CD4-positive, alpha-beta T cell (primary cell): ENCODE measurements at regions of chr11 and their contacts with region 1.

Region 1: DNA sequence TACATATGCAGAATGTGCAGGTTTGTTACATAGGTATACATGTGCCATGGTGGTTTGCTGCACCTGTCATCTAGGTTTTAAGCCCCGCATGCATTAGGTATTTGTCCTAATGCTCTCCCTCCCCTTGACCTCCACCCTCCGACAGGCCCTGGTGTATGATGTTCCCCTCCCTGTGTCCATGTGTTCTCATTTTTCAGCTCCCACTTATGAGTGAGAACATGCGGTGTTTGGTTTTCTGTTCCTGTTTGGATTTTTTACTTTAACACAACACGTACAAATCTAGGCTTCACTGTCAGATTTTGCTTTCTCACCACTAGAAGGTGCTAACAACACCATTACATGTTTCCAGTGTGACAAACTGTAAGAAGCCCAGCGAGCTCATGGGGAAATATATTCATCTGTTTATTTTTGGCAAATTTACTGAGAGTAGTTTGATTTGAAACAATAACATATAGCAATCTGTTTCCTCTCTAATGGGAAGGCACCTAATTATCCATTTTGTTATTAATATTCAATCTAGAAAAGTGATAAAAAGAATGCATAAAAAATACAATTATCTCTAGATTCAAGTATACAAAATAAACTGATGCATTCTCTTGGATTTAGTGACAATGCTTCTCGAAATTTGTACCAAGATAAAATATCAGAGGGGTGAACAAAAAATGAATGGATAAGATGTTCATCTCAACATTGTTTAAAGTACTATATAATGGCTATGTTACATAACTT is 23.2 kb upstream of the BIRC3 start:
- DNase-seq: peak in 5 of 14 experiments; percentile 8 to 85 (median 79)
- ATAC-seq: peak; percentile 99
- H3K4me3 ChIP-seq: peak overlapping the region; percentile 48
- H3K4me3 Mint-ChIP-seq: peak overlapping the region; percentile 82
- H3K27ac ChIP-seq: no peak overlapping the region
- H3K27ac Mint-ChIP-seq: peak overlapping the region; percentile 68
- H3K4me1 ChIP-seq: peaks cover 14% of the 10 kb centered on the region
- H3K4me1 Mint-ChIP-seq: peaks cover 36% of the 10 kb centered on the region
- H3K27me3 ChIP-seq: no peaks in the 10 kb centered on the region
- H3K27me3 Mint-ChIP-seq: no peaks in the 10 kb centered on the region
- CTCF ChIP-seq: peak; percentile 92

Region 2: GRCh38 chr11:102306048-102306585 is 12.1 kb after region 1 on chr11:
- CTCF ChIA-PET with region 1: interaction called, 185 read pairs
- POLR2A ChIA-PET with region 1: interaction called, 60 read pairs
- intact Hi-C with region 1: no loop called
- DNase-seq: peak in 10 of 14 experiments; percentile 34 to 66 (median 40)
- ATAC-seq: peak; percentile 72
- H3K4me3 ChIP-seq: no peak overlapping the region
- H3K4me3 Mint-ChIP-seq: peak overlapping the region; percentile 69
- H3K27ac ChIP-seq: peak overlapping the region; percentile 76 to 80
- H3K27ac Mint-ChIP-seq: peak overlapping the region; percentile 98
- H3K4me1 ChIP-seq: peaks cover 54% of the 10 kb centered on the region
- H3K4me1 Mint-ChIP-seq: peaks cover 68% of the 10 kb centered on the region
- H3K27me3 ChIP-seq: no peaks in the 10 kb centered on the region
- H3K27me3 Mint-ChIP-seq: no peaks in the 10 kb centered on the region
- CTCF ChIP-seq: no peak

Region 3: DNA sequence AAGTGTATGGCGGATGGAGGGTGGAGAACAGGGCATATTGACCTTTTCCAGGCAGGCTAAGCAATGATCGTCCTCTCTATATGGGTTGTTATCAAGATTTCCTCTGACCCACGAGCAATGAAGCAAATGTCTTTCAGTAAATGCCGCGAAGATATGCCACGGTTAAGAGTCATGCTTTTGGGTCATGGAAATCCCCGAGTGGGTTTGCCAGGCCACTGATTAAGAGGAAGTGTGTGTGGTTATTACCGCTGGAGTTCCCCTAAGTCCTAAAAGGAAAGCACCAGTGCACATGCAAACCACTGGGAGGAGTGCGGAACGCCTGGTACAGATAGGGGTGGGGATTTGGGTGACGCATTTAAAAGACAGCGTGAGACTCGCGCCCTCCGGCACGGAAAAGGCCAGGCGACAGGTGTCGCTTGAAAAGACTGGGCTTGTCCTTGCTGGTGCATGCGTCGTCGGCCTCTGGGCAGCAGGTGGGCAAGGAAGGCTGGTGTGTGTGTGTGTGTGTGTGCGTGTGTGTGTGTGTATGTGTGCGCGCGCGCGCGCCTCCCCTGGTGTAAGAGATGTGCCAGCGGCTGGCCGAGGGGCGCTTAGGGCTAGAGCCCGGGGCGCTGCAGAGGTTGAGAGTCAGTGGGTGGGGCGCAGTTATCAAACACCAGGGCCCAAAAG is 23.2 kb after region 1 on chr11 and contains the start of gene BIRC3:
- CTCF ChIA-PET with region 1: interaction called, 185 read pairs
- POLR2A ChIA-PET with region 1: interaction called, 156 read pairs
- intact Hi-C with region 1: loop called (anchors 1 kb)
- DNase-seq: peak; percentile 74 to 99 (median 88)
- ATAC-seq: peak; percentile 83
- H3K4me3 ChIP-seq: peak within 1 kb of the TSS; percentile 91
- H3K4me3 Mint-ChIP-seq: peak within 1 kb of the TSS; percentile 97
- H3K27ac ChIP-seq: peak within 1 kb of the TSS; percentile 95 to 96
- H3K27ac Mint-ChIP-seq: peak within 1 kb of the TSS; percentile 93
- H3K4me1 ChIP-seq: peaks cover 42% of the 10 kb centered on the region
- H3K4me1 Mint-ChIP-seq: peaks cover 75% of the 10 kb centered on the region
- H3K27me3 ChIP-seq: no peaks in the 10 kb centered on the region
- H3K27me3 Mint-ChIP-seq: no peaks in the 10 kb centered on the region
- CTCF ChIP-seq: peak; percentile 34
- total RNA-seq, gene BIRC3: 115 to 124 TPM

Region 4: DNA sequence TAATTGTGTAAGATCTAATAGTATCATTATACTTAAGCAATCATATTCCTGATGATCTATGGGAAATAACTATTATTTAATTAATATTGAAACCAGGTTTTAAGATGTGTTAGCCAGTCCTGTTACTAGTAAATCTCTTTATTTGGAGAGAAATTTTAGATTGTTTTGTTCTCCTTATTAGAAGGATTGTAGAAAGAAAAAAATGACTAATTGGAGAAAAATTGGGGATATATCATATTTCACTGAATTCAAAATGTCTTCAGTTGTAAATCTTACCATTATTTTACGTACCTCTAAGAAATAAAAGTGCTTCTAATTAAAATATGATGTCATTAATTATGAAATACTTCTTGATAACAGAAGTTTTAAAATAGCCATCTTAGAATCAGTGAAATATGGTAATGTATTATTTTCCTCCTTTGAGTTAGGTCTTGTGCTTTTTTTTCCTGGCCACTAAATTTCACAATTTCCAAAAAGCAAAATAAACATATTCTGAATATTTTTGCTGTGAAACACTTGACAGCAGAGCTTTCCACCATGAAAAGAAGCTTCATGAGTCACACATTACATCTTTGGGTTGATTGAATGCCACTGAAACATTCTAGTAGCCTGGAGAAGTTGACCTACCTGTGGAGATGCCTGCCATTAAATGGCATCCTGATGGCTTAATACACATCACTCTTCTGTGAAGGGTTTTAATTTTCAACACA is 29.7 kb after region 1 on chr11:
- CTCF ChIA-PET with region 1: interaction called, 185 read pairs
- POLR2A ChIA-PET with region 1: interaction called, 156 read pairs
- intact Hi-C with region 1: loop called in 1 of 2 experiments (anchors 1 kb)
- DNase-seq: no peak
- ATAC-seq: no peak
- H3K4me3 ChIP-seq: no peak overlapping the region
- H3K4me3 Mint-ChIP-seq: no peak overlapping the region
- H3K27ac ChIP-seq: peak overlapping the region in 1 of 2 donors; percentile 20
- H3K27ac Mint-ChIP-seq: peak overlapping the region; percentile 50
- H3K4me1 ChIP-seq: peaks cover 36% of the 10 kb centered on the region
- H3K4me1 Mint-ChIP-seq: peaks cover 62% of the 10 kb centered on the region
- H3K27me3 ChIP-seq: no peaks in the 10 kb centered on the region
- H3K27me3 Mint-ChIP-seq: no peaks in the 10 kb centered on the region
- CTCF ChIP-seq: no peak

Region 5: DNA sequence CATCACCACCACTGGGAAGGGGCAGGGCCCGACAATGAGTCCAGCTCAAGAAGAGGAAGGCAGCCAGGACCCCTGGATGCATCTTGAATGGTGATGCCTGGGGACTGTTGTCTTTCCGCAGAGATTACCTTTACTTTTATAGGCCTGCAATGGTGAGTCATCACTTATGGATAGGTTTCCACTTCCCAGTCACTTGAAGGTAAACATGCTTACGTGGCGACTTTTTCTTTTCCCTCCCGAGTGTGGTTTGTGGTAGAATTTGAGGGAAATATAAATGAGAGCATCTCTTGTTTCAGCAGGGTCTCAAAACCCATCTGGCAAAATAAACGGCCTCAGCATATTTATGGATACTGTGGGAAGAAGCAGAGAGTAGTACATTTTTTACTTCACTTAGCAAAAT is 661.6 kb after region 1 on chr11 and contains the start of gene MMP13:
- CTCF ChIA-PET with region 1: no interaction called
- POLR2A ChIA-PET with region 1: no interaction called
- intact Hi-C with region 1: no loop called
- DNase-seq: no peak
- ATAC-seq: no peak
- H3K4me3 ChIP-seq: no peak within 1 kb of the TSS
- H3K4me3 Mint-ChIP-seq: no peak within 1 kb of the TSS
- H3K27ac ChIP-seq: no peak within 1 kb of the TSS
- H3K27ac Mint-ChIP-seq: no peak within 1 kb of the TSS
- H3K4me1 ChIP-seq: no peaks in the 10 kb centered on the region
- H3K4me1 Mint-ChIP-seq: no peaks in the 10 kb centered on the region
- H3K27me3 ChIP-seq: no peaks in the 10 kb centered on the region
- H3K27me3 Mint-ChIP-seq: peaks cover 5% of the 10 kb centered on the region
- CTCF ChIP-seq: no peak
- total RNA-seq, gene MMP13: not detected